ENCODE measurements at regions of chr2 and their contacts with region 1.

Region 1: GRCh38 chr2:27303093-27304025 is 4.9 kb downstream of the UCN start:
- DNase-seq: peak; percentile 70
- H3K4me3 Mint-ChIP-seq: peak overlapping the region; percentile 56
- H3K27ac Mint-ChIP-seq: no peak overlapping the region
- H3K4me1 Mint-ChIP-seq: peaks cover 12% of the 10 kb centered on the region
- H3K27me3 Mint-ChIP-seq: peaks cover 12% of the 10 kb centered on the region

Region 2: DNA sequence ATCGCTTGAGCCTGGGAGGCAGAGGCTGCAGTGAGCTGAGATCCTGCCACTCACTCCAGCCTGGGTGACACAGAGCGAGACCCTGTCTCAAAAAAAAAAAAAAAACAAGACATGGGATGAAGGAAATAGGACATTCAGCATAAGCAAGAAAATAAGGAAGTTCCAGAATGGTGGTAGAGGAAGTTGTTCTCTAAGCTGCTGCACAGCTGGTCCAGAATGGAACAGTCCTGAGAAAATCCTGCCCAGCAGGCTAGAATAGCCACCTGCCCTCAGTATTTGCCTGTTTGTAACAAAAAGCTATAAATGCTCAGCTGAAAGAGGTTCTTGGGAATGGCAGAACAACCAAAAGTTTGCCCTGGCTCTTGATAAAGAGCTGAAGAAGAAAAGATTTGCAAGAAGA is 344.0 kb before region 1 on chr2:
- CTCF ChIA-PET with region 1: interaction called, 17 read pairs
- intact Hi-C with region 1: loop called (anchors 1 kb)
- DNase-seq: no peak
- H3K4me3 Mint-ChIP-seq: no peak overlapping the region
- H3K27ac Mint-ChIP-seq: no peak overlapping the region
- H3K4me1 Mint-ChIP-seq: no peaks in the 10 kb centered on the region
- H3K27me3 Mint-ChIP-seq: peaks cover 12% of the 10 kb centered on the region

Region 3: DNA sequence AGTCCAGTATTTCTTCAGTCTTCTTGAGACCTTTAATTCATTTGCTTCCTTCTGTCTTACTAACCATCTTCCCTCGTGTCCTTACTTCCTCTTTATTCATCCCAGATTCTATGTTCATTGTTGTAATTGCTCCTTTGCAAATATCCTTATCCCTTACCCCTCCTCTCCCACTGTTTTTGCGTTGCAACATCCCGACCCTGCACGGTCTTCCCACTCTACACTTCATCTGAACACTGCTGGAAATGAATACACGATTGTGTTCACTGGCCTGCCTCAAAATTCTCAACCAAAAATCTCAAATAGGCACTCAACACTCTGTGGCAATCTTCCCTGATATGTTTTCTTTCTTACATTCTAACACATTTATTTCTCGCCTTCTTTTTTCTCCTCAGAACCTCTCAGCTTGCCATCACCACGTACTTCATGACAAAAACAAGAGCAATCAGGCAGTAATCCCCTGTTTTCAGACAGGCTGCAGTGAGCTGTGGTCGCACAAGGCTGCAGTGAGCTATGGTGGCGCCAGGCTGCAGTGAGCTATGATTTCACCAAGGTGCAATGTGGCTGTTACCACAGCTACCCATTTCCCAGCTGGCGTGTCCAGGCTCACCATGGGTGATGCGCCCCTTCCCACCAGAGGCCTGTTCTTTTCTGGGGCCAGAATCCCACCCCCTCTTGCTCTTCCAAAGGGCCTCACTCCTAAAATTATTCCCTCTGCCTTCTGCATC is 128.9 kb before region 1 on chr2:
- CTCF ChIA-PET with region 1: interaction called, 3 read pairs
- intact Hi-C with region 1: loop called (anchors 5 kb)
- DNase-seq: no peak
- H3K4me3 Mint-ChIP-seq: no peak overlapping the region
- H3K27ac Mint-ChIP-seq: no peak overlapping the region
- H3K4me1 Mint-ChIP-seq: no peaks in the 10 kb centered on the region
- H3K27me3 Mint-ChIP-seq: peaks cover 15% of the 10 kb centered on the region

Region 4: GRCh38 chr2:27202854-27203253 is 100.5 kb before region 1 on chr2:
- CTCF ChIA-PET with region 1: no interaction called
- intact Hi-C with region 1: no loop called
- DNase-seq: no peak
- H3K4me3 Mint-ChIP-seq: no peak overlapping the region
- H3K27ac Mint-ChIP-seq: no peak overlapping the region
- H3K4me1 Mint-ChIP-seq: no peaks in the 10 kb centered on the region
- H3K27me3 Mint-ChIP-seq: no peaks in the 10 kb centered on the region

Region 5: DNA sequence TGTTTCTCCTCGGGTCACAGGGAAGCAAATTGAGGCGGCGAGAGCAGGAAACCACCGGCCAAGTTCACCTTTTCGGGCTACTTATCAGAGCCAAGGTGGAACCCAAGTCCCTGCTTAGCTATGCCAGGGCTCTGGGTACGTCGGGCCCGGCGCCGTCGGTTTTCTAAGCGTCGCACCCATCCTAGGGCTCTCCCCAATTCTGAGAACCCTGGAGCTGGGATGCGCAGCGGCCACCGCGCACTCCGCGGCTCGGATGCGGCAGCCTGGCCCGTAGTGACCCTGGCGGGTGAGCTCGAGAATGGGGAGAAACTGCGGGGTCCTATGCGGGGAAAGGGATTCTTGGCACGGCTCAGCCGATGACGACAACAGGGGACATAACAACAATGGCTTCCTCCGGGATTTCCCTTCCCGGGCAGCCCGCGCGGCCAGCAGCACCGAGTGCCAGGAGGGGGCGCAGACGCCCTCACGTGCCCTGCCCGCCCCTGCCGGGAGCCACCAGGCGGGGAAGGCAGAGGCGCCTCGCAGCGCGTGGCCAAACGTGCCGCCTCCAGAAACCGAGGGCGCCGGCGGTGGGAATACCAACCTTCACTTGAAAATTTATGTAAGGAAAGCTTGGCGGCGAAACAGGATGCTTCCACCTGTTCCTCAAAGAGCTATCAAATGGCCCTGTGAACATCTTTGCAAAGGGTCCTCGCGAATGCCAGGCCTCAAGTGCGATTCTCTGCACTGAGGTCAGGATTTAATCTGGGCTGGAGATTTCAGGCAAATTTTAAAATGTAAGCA is 38.4 kb before region 1 on chr2:
- CTCF ChIA-PET with region 1: interaction called, 12 read pairs
- intact Hi-C with region 1: loop called (anchors 5 kb)
- DNase-seq: peak; percentile 81
- H3K4me3 Mint-ChIP-seq: peak overlapping the region; percentile 77
- H3K27ac Mint-ChIP-seq: no peak overlapping the region
- H3K4me1 Mint-ChIP-seq: peaks cover 26% of the 10 kb centered on the region
- H3K27me3 Mint-ChIP-seq: peaks cover 44% of the 10 kb centered on the region

Region 6: DNA sequence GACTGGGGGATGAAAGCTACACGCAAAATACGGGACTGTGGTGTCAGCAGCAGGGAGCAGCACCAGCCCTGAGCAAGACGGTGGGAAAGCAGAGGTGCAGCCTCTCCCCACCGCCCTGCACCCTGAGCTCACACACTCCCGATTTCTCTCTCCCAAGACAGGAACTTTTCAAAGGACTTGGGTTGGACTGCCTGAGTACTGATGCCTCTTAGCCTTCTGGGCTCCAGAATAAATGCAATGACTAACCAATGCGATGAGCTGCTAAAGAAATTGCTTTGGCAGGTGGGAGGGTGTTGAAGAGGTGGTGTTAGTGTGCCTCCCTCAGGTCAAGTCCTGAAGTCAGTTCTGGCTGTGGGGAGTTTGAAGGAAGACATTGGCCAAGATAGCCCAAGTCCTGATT is 11.5 kb before region 1 on chr2:
- CTCF ChIA-PET with region 1: interaction called, 31 read pairs
- intact Hi-C with region 1: no loop called
- DNase-seq: no peak
- H3K4me3 Mint-ChIP-seq: no peak overlapping the region
- H3K27ac Mint-ChIP-seq: no peak overlapping the region
- H3K4me1 Mint-ChIP-seq: no peaks in the 10 kb centered on the region
- H3K27me3 Mint-ChIP-seq: peaks cover 2% of the 10 kb centered on the region

Region 7: GRCh38 chr2:27380626-27381545 is 77.5 kb after region 1 on chr2 and contains the start of gene ZNF513:
- CTCF ChIA-PET with region 1: no interaction called
- intact Hi-C with region 1: no loop called
- DNase-seq: peak; percentile 93
- H3K4me3 Mint-ChIP-seq: peak within 1 kb of the TSS; percentile 79
- H3K27ac Mint-ChIP-seq: peak within 1 kb of the TSS; percentile 86
- H3K4me1 Mint-ChIP-seq: peaks cover 30% of the 10 kb centered on the region
- H3K27me3 Mint-ChIP-seq: no peaks in the 10 kb centered on the region
- total RNA-seq, gene ZNF513: 4.9 to 5.2 TPM